Gastrocnemius medialis (tissue), 4 donors: ENCODE measurements at regions of chr4 and their contacts with region 1.

Region 1: DNA sequence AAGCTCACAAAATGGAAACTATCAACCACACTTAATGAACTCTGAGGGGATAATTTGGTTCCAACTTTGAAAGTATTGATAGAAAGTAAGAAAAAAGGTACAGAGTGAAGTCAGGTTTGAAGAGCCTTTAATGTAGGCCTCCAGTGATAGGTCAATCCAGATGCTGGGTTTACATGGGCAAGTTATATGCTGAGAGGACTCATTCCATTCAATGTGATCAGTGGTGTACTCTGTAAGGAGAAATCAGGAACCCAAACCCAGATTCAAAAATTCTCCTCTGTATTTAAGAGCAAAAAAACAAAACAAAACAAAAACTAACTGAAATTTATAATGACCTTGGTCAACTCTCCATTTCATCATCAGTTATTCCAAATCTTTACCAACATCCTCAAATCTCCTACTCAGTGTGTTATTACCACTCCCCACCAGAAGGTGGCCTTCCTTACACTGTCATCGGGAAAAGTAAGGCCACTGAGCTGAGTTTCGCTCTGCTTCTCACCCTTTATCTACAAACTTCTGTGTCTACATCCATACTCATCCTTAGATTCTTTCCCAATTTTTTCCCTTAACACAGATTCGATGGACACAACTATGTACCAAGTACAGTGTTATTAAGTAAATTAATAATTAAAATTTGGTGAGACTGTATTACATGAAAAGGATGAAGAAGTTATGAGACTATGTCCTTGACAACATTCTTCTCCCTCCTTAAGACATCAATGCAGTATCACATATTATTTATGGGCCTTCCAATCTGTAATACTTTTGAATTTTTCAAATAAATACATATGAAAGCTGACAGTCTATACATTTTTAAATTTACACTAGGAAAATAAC is 88.3 kb downstream of the ZAR1 start:
- DNase-seq: peak in 1 of 2 donors; percentile 34
- ATAC-seq: peak; percentile 83 to 93
- H3K4me3 ChIP-seq: no peak overlapping the region
- H3K27ac ChIP-seq: no peak overlapping the region
- H3K4me1 ChIP-seq: no peaks in the 10 kb centered on the region
- H3K27me3 ChIP-seq: no peaks in the 10 kb centered on the region
- CTCF ChIP-seq: peak; percentile 78 to 89 (median 83)
- POLR2A ChIP-seq: no peak

Region 2: DNA sequence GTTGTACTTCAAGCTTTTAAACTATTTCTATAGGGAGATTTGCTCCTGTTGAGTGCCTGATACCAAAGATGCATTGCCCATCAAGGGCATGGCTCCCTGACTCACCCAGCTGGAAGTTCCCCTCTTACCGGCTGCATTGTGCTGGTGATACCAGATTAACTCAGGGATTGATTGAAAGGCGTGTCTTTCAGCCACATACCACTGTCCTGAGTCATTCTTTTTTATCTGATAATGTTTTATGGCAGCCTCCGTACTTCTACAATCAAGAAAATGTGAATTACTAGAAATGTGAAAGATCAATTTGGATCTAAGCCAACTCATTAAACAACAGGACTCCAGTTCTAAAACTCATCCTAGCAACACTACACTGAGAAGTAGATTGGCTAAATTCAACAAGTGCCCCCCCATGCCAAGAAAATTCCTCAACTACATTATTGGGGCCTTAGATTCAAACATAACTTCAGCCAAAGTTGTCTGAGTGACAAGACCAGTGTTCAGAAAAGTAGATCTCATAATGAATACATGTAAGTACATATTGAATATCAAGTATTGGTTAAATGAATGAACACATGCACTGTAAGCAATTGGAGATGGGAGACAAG is 484.3 kb before region 1 on chr4:
- in situ Hi-C with region 1: no loop called
- intact Hi-C with region 1: no loop called
- DNase-seq: no peak
- ATAC-seq: no peak
- H3K4me3 ChIP-seq: no peak overlapping the region
- H3K27ac ChIP-seq: no peak overlapping the region
- H3K4me1 ChIP-seq: no peaks in the 10 kb centered on the region
- H3K27me3 ChIP-seq: no peaks in the 10 kb centered on the region
- CTCF ChIP-seq: no peak
- POLR2A ChIP-seq: no peak

Region 3: GRCh38 chr4:48483006-48483776 is 95.2 kb before region 1 on chr4 and contains the start of gene SLC10A4:
- in situ Hi-C with region 1: no loop called
- intact Hi-C with region 1: no loop called
- DNase-seq: no peak
- ATAC-seq: no peak
- H3K4me3 ChIP-seq: peak within 1 kb of the TSS; percentile 25 to 40 (median 30)
- H3K27ac ChIP-seq: no peak within 1 kb of the TSS
- H3K4me1 ChIP-seq: no peaks in the 10 kb centered on the region
- H3K27me3 ChIP-seq: peaks cover 33 to 54% (median 39%) of the 10 kb centered on the region in 3 donors
- CTCF ChIP-seq: no peak
- POLR2A ChIP-seq: no peak
- total RNA-seq, gene SLC10A4: 0.33 TPM in 1 of 4 donors, not detected in the others

Region 4: DNA sequence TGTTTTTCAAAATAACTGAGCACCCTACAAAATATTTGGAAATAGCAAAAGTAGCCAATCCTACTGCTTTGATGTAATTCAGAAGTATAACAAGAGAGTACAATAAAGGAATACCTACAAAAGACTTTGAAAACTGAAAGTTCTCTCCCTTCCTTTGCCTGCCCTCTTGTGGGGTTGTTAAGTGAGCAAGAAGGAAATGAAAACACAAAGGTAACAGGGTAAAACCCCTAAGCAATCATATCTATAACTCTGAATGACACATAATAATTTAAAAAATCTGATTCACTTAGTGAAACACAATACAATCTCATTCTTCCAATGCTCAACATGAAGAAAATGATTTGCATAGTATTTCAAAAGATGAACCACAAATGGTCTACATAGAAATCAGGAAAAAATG is 103.5 kb after region 1 on chr4:
- in situ Hi-C with region 1: loop called in 1 of 4 experiments (anchors 10 kb)
- intact Hi-C with region 1: loop called (anchors 5 kb)
- DNase-seq: no peak
- ATAC-seq: no peak
- H3K4me3 ChIP-seq: no peak overlapping the region
- H3K27ac ChIP-seq: no peak overlapping the region
- H3K4me1 ChIP-seq: peaks cover 9 to 18% of the 10 kb centered on the region in 2 donors
- H3K27me3 ChIP-seq: no peaks in the 10 kb centered on the region
- CTCF ChIP-seq: peak in 4 of 5 experiments; percentile 14 to 44 (median 27)
- POLR2A ChIP-seq: no peak

Region 5: DNA sequence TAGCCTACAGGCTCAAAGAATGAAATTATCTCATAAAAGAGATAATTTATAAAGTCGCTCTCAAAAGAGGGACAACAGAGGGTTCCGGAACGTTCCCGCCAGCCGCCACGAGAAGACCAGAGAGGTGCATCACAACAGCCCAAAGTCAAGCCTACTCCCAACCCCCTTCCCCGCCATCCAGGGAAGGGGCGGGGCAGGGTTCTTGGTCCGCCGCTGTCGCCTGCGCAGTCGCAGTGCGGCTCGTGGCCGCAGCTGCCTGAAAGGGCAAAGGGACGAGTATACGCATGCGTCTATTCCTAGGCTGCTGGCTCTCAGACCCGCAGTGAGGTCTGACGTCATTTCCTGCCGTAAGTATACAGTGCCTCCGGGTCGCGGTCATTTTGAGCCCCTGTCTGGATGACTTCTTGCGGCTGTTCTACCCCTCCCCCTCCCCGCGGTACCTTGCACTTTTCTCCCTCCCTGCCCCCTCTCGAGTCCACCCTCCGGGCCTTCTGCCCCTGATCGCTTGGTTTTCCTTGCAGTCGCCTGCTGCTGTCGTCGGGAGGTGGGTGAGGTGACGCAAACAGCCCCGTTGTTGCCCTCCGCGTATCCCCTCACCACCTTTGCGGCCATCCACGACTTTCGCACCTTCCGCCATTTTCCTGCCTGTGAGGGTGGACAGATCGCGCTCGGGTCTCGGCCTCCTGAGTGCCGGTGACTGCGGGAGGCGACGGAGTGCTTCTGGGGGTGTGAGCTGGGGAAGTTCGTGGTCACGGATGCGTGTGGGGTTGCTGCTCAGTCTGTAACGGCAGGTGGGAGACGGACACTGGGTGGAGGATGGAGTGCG is 252.6 kb after region 1 on chr4 and contains the start of gene OCIAD1:
- in situ Hi-C with region 1: no loop called
- intact Hi-C with region 1: loop called (anchors 5 kb)
- DNase-seq: peak; percentile 99
- ATAC-seq: peak; percentile 100
- H3K4me3 ChIP-seq: peak within 1 kb of the TSS; percentile 80 to 100 (median 92)
- H3K27ac ChIP-seq: peak within 1 kb of the TSS; percentile 95 to 96 (median 96)
- H3K4me1 ChIP-seq: peaks cover 17 to 22% of the 10 kb centered on the region in 2 donors
- H3K27me3 ChIP-seq: no peaks in the 10 kb centered on the region
- CTCF ChIP-seq: peak in 1 of 5 experiments; percentile 7
- POLR2A ChIP-seq: peak; percentile 38 to 47
- total RNA-seq, gene OCIAD1: 84.4 to 157 (median 126) TPM